ENCODE measurements at regions of chr4 and their contacts with region 1.

Region 1: GRCh38 chr4:164768516-164768915 is 14.6 kb downstream of the SMIM31 start:
- DNase-seq: peak; percentile 13
- H3K4me3 Mint-ChIP-seq: no peak overlapping the region
- H3K27ac Mint-ChIP-seq: no peak overlapping the region
- H3K4me1 Mint-ChIP-seq: peaks cover 15% of the 10 kb centered on the region
- H3K27me3 Mint-ChIP-seq: peaks cover 27% of the 10 kb centered on the region
- CTCF ChIP-seq: peak; percentile 32

Region 2: GRCh38 chr4:164481306-164482091 is 287.0 kb before region 1 on chr4:
- CTCF ChIA-PET with region 1: no interaction called
- POLR2A ChIA-PET with region 1: no interaction called
- intact Hi-C with region 1: no loop called
- DNase-seq: no peak
- H3K4me3 Mint-ChIP-seq: no peak overlapping the region
- H3K27ac Mint-ChIP-seq: no peak overlapping the region
- H3K4me1 Mint-ChIP-seq: no peaks in the 10 kb centered on the region
- H3K27me3 Mint-ChIP-seq: no peaks in the 10 kb centered on the region
- CTCF ChIP-seq: no peak

Region 3: DNA sequence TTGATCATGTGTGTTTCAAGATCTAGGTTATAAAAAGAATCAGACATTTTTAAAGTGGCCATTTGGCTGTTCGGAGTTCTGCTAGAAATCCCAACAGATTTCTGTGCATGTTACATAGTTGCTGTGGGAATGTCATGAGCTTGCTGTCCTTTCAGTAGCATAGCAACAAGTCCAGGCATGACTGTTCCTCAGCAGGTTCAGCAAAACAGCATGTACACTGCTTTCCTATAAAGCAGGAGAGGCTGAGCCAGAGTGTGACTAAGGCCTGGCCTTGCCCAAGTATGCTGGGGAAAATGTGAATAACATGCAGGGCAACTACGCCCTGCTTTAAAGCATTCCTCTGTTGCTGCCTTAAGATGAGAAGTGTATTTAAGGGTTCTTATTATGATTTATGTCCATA is 231.7 kb before region 1 on chr4:
- CTCF ChIA-PET with region 1: no interaction called
- POLR2A ChIA-PET with region 1: no interaction called
- intact Hi-C with region 1: no loop called
- DNase-seq: peak; percentile 91
- H3K4me3 Mint-ChIP-seq: peak overlapping the region; percentile 12
- H3K27ac Mint-ChIP-seq: peak overlapping the region; percentile 98
- H3K4me1 Mint-ChIP-seq: peaks cover 21% of the 10 kb centered on the region
- H3K27me3 Mint-ChIP-seq: no peaks in the 10 kb centered on the region
- CTCF ChIP-seq: no peak

Region 4: GRCh38 chr4:164756686-164757085 is 11.8 kb before region 1 on chr4:
- CTCF ChIA-PET with region 1: interaction called, 29 read pairs
- POLR2A ChIA-PET with region 1: no interaction called
- intact Hi-C with region 1: no loop called
- DNase-seq: no peak
- H3K4me3 Mint-ChIP-seq: no peak overlapping the region
- H3K27ac Mint-ChIP-seq: no peak overlapping the region
- H3K4me1 Mint-ChIP-seq: no peaks in the 10 kb centered on the region
- H3K27me3 Mint-ChIP-seq: no peaks in the 10 kb centered on the region
- CTCF ChIP-seq: no peak

Region 5: GRCh38 chr4:164937576-164938270 is 169.2 kb after region 1 on chr4:
- CTCF ChIA-PET with region 1: interaction called, 35 read pairs
- POLR2A ChIA-PET with region 1: no interaction called
- intact Hi-C with region 1: no loop called
- DNase-seq: peak; percentile 54
- H3K4me3 Mint-ChIP-seq: no peak overlapping the region
- H3K27ac Mint-ChIP-seq: no peak overlapping the region
- H3K4me1 Mint-ChIP-seq: no peaks in the 10 kb centered on the region
- H3K27me3 Mint-ChIP-seq: no peaks in the 10 kb centered on the region
- CTCF ChIP-seq: peak; percentile 18

Region 6: DNA sequence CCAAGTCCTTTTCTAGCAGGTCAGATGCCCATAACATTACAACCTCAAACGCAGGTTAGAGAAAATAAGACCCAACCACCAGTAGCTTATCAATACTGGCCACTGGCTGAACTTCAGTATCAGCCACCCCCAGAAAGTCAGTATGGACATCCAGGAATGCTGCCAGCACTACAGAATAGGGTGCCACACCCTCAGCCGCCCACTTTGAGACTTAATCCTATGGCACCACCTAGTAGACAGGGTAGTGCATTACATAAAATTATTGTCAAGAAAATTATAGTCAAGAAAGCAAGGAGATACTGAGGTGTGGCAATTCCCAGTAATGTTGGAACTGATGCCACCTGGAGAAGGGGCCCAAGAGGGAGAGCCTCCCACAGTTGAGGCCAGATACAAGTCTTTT is 228.8 kb after region 1 on chr4:
- CTCF ChIA-PET with region 1: interaction called, 37 read pairs
- POLR2A ChIA-PET with region 1: interaction called, 3 read pairs
- intact Hi-C with region 1: loop called (anchors 1 kb)
- DNase-seq: peak; percentile 70
- H3K4me3 Mint-ChIP-seq: no peak overlapping the region
- H3K27ac Mint-ChIP-seq: no peak overlapping the region
- H3K4me1 Mint-ChIP-seq: no peaks in the 10 kb centered on the region
- H3K27me3 Mint-ChIP-seq: no peaks in the 10 kb centered on the region
- CTCF ChIP-seq: peak; percentile 44

Region 7: GRCh38 chr4:165096776-165097175 is 328.3 kb after region 1 on chr4:
- CTCF ChIA-PET with region 1: interaction called, 29 read pairs
- POLR2A ChIA-PET with region 1: no interaction called
- intact Hi-C with region 1: no loop called
- DNase-seq: peak; percentile 17
- H3K4me3 Mint-ChIP-seq: no peak overlapping the region
- H3K27ac Mint-ChIP-seq: no peak overlapping the region
- H3K4me1 Mint-ChIP-seq: no peaks in the 10 kb centered on the region
- H3K27me3 Mint-ChIP-seq: no peaks in the 10 kb centered on the region
- CTCF ChIP-seq: peak; percentile 39

Region 8: DNA sequence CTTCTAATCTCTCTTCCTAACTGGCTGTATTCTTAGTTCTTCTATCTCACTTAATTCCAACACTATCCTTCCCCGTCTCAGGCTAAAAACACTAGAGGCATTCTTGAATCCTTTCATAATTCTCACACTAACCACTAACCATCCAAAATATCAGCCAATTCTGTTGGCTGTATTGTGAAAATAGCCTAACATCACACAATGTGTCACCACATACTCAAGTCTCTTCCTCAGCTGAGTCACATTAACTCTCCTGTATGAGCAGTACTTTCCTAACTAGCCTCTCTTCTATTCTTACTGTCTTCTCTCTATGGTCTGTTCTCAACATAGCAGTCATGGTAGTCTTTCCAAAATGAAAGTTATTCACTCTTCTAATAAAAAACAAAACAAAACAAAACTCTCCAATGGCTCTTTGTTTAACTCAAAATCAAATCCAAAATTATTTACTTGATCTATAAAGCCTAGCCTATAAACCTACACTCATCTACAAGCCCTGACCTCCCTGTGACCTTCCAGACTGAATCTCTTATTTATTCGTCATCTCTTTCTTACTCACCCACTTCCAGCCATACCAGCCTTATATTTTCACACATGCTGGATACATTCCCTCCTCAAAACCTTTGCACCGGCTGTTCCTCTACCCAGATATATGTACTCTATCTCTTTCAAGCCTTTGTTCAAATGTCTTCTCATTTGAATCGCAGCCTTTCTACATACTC is 1550.5 kb after region 1 on chr4:
- CTCF ChIA-PET with region 1: no interaction called
- POLR2A ChIA-PET with region 1: no interaction called
- intact Hi-C with region 1: no loop called
- DNase-seq: peak; percentile 59
- H3K4me3 Mint-ChIP-seq: no peak overlapping the region
- H3K27ac Mint-ChIP-seq: peak overlapping the region; percentile 5
- H3K4me1 Mint-ChIP-seq: peaks cover 17% of the 10 kb centered on the region
- H3K27me3 Mint-ChIP-seq: no peaks in the 10 kb centered on the region
- CTCF ChIP-seq: no peak